Breast epithelium (tissue), 4 donors: ENCODE measurements at regions of chr7 and their contacts with region 1.

Region 1: DNA sequence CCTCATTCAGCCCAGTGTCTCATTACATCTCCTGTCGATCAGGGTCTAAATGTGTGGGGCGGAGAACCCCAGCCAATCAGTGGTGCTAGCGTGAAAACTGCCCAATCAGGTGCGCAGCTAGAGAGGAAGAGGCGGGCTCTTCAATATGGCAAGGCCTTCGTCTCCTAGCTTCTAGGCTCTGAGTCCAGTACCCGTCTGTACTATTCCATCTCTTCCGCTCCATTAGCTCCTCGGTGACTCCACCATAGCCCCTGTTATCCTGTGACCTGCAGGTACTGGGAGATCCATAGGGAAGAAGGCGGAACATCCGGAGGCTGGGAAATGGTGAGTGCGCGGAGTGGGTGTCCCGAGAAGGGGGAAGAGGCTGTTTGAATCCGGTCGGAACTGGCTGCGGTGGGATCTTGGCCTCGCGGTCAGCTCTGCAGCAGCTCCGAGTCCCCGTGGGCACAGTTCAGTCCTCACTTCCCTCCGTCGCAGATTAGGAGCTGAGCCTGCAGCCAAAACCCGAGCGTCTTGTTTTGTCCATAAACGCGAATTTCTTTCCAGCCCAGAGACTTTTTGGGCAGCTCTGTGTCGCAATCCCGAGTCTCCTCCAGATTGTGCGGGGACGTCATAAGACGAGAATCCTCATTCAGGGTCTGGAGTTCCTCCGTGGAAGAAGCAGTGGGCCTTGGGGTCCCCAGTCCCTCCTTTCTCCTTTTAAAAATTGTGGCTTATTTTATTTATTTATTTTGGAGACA is at the start of gene ZNF727:
- DNase-seq: peak in 1 of 2 donors; percentile 81
- H3K4me3 ChIP-seq: peak within 1 kb of the TSS; percentile 52 to 67 (median 61)
- H3K27ac ChIP-seq: peak within 1 kb of the TSS; percentile 79 to 86
- H3K4me1 ChIP-seq: peaks cover 0 to 6% of the 10 kb centered on the region in 2 donors
- H3K27me3 ChIP-seq: no peaks in the 10 kb centered on the region
- CTCF ChIP-seq: no peak
- POLR2A ChIP-seq: no peak
- total RNA-seq, gene ZNF727: 2.9 to 19.0 (median 3.6) TPM

Region 2: DNA sequence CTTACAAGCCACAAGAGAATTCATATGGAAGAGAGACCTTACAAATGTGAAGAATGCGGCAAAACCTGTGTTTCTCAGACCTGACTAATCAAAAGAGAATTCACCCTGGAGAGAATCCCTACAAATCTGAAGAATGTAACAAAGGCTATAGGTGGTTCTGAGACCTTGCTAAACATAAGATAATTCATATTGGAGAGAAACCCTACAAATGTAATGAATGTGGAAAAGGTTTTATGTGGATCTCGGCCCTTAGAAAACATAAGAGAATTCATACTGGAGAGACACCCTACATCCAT is 33.2 kb after region 1 on chr7:
- intact Hi-C with region 1: no loop called
- DNase-seq: no peak
- H3K4me3 ChIP-seq: no peak overlapping the region
- H3K27ac ChIP-seq: no peak overlapping the region
- H3K4me1 ChIP-seq: no peaks in the 10 kb centered on the region
- H3K27me3 ChIP-seq: no peaks in the 10 kb centered on the region
- CTCF ChIP-seq: no peak
- POLR2A ChIP-seq: no peak

Region 3: DNA sequence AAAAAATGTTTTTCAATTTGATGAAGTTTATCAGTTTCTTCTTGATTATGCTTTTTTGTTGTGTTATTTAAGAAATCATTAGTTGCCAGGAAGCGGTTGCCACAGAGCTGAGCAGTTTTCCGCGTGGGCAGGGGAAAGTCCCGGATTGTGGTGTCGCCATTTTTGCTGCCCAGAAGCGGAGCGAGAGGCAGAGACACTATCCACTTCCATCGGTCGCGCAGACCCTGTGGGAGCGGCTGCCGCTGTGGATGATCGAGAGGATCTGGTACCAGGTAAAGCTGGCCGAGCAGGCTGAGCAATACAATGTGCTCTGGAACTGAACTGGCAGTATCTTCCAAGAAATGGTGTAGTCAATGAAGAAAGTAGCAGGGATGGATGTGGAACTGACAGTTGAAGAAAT is 388.1 kb after region 1 on chr7:
- intact Hi-C with region 1: no loop called
- DNase-seq: no peak
- H3K4me3 ChIP-seq: no peak overlapping the region
- H3K27ac ChIP-seq: no peak overlapping the region
- H3K4me1 ChIP-seq: no peaks in the 10 kb centered on the region
- H3K27me3 ChIP-seq: no peaks in the 10 kb centered on the region
- CTCF ChIP-seq: no peak
- POLR2A ChIP-seq: no peak

Region 4: GRCh38 chr7:64729051-64729848 is 683.8 kb after region 1 on chr7:
- intact Hi-C with region 1: loop called (anchors 10 kb)
- DNase-seq: no peak
- H3K4me3 ChIP-seq: no peak overlapping the region
- H3K27ac ChIP-seq: peak overlapping the region; percentile 28 to 36
- H3K4me1 ChIP-seq: no peaks in the 10 kb centered on the region
- H3K27me3 ChIP-seq: no peaks in the 10 kb centered on the region
- CTCF ChIP-seq: no peak
- POLR2A ChIP-seq: no peak